ENCODE measurements at regions of chr3 and their contacts with region 1.

Region 1: DNA sequence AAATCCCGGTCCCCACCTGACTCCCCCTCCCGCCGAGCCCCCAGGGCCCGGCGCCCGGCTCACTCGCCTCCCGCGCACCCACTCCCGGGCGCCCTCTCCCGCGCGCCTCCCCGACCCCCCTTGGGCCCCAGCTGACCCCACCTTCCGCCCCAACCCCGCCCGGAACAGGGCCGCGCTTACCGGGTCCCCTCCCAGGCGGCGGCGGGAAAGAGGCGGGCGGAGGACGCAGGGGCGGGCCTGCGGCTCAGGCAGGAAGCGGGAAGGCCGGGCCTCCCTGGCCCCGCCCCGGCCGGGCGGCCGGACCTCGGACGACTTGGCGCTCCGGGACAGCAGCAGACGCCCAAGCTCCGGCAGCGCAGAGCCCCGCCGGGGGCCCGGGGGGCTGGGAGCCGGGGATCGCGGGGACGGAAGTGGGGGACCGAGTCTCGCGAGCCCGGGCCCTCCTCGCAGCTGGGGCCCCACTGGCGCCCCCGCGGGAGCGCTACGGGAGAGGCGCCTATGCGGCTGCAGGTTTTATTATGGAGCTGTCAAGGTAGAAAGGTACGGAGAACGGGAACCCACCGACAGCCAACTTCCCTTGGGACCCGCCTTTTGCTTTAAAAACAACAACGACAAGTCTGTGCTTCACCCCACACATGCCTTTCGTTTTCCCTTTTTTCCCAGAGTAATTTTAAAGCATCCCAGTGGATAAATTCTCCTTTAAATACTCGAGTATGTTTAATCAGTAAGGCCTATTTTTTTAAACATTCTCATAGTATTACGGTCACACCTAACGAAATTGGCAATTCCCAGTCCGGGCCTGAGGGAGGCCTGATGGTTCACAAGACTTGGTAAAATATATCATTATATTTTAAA is at the start of gene SLC41A3:
- DNase-seq: peak; percentile 65 to 88 (median 82)
- ATAC-seq: peak; percentile 86
- H3K4me3 ChIP-seq: peak within 1 kb of the TSS; percentile 70
- H3K4me3 Mint-ChIP-seq: peak within 1 kb of the TSS; percentile 93
- H3K27ac ChIP-seq: peak within 1 kb of the TSS; percentile 33 to 72
- H3K27ac Mint-ChIP-seq: peak within 1 kb of the TSS; percentile 85
- H3K4me1 ChIP-seq: peaks cover 28% of the 10 kb centered on the region
- H3K4me1 Mint-ChIP-seq: peaks cover 30% of the 10 kb centered on the region
- H3K27me3 ChIP-seq: no peaks in the 10 kb centered on the region
- H3K27me3 Mint-ChIP-seq: no peaks in the 10 kb centered on the region
- CTCF ChIP-seq: peak; percentile 82
- total RNA-seq, gene SLC41A3: 26.5 to 29.1 TPM

Region 2: DNA sequence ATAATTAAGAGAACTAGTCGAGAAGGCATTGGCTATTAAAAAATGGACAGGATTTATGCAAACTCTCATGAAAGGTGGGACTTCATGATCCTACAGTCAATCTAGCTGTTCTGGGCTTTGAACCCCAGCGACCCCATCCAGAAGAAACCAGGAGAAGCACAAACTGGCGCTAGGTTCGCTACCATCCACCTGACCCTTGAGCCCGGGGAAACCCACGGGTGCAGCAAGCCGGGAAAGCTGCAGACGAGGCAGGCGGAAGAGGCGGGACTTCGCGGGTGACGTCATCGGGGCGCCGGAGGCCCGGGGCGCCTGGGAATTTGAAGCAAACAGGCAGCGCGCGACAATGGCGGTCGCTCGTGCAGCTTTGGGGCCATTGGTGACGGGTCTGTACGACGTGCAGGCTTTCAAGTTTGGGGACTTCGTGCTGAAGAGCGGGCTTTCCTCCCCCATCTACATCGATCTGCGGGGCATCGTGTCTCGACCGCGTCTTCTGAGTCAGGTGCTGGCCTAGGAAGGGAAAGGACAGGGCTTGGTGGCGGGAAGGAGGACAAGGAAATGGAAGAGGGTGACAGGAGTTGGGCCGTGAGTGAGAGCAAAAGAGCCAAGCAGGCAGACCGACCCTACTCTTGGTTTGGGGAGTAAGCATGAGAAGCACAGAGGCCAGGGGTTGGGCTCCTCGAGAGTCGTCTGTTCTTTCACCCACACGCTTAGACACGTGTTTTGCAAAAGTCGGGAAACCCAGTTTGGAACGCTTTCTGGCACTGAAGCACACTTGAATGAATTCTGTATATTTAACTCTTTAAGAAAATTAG is 1353.8 kb before region 1 on chr3 and contains the start of gene UMPS:
- CTCF ChIA-PET with region 1: no interaction called
- POLR2A ChIA-PET with region 1: no interaction called
- intact Hi-C with region 1: loop called in 1 of 2 experiments (anchors 10 kb)
- DNase-seq: peak; percentile 83 to 95 (median 91)
- ATAC-seq: peak; percentile 97
- H3K4me3 ChIP-seq: peak within 1 kb of the TSS; percentile 78
- H3K4me3 Mint-ChIP-seq: peak within 1 kb of the TSS; percentile 98
- H3K27ac ChIP-seq: peak within 1 kb of the TSS; percentile 54 to 76
- H3K27ac Mint-ChIP-seq: peak within 1 kb of the TSS; percentile 94
- H3K4me1 ChIP-seq: peaks cover 21% of the 10 kb centered on the region
- H3K4me1 Mint-ChIP-seq: peaks cover 44% of the 10 kb centered on the region
- H3K27me3 ChIP-seq: peaks cover 5 to 11% of the 10 kb centered on the region in 2 experiments
- H3K27me3 Mint-ChIP-seq: peaks cover 17% of the 10 kb centered on the region
- CTCF ChIP-seq: no peak
- total RNA-seq, gene UMPS: 19.5 to 19.7 TPM

Region 3: DNA sequence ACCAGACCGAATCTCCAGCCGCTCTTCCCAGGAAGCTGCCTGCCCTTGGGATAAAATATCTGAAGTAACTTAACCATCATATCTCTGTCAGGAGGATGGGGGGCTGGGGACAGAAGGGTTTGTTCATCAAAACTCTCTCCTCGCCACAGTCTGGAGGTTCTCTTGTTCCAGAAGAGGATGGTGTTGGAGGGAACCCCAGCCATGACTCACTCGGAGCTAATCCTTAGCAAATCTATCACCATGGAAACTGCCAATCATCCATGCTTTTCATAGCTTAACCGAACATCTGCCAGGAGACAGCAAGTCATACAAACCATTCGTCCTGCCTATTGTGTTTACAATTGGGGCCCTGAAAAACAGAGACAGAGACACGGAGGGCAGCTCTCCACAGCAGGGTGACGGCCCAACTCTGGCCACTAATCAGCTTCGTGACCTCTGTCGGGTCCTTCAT is 954.6 kb before region 1 on chr3:
- CTCF ChIA-PET with region 1: no interaction called
- POLR2A ChIA-PET with region 1: no interaction called
- intact Hi-C with region 1: no loop called
- DNase-seq: no peak
- ATAC-seq: no peak
- H3K4me3 ChIP-seq: no peak overlapping the region
- H3K4me3 Mint-ChIP-seq: no peak overlapping the region
- H3K27ac ChIP-seq: no peak overlapping the region
- H3K27ac Mint-ChIP-seq: no peak overlapping the region
- H3K4me1 ChIP-seq: peaks cover 7% of the 10 kb centered on the region
- H3K4me1 Mint-ChIP-seq: peaks cover 13% of the 10 kb centered on the region
- H3K27me3 ChIP-seq: no peaks in the 10 kb centered on the region
- H3K27me3 Mint-ChIP-seq: no peaks in the 10 kb centered on the region
- CTCF ChIP-seq: no peak

Region 4: DNA sequence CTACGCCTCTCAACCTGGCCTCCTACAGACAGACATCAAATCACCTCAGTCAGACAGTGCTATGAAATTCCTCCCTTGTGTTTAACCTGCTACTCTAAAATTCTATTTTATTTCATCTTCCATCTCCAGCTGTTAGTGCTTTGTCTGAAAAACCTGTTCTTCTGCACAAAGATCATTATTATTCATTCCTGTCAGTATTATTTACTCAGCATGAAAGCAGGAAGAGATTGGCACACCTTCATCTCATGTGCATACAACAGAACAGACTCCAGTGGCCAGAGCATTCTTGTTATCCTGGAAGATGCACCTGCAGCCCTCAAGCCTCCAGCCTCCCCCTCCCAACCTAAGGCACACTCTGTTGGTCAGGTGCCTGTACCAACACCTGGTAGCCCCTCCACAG is 117.0 kb before region 1 on chr3:
- CTCF ChIA-PET with region 1: interaction called, 4 read pairs
- POLR2A ChIA-PET with region 1: no interaction called
- intact Hi-C with region 1: loop called in 1 of 2 experiments (anchors 5 kb)
- DNase-seq: no peak
- ATAC-seq: no peak
- H3K4me3 ChIP-seq: no peak overlapping the region
- H3K4me3 Mint-ChIP-seq: no peak overlapping the region
- H3K27ac ChIP-seq: no peak overlapping the region
- H3K27ac Mint-ChIP-seq: no peak overlapping the region
- H3K4me1 ChIP-seq: peaks cover 5% of the 10 kb centered on the region
- H3K4me1 Mint-ChIP-seq: peaks cover 3% of the 10 kb centered on the region
- H3K27me3 ChIP-seq: peaks cover 25 to 33% of the 10 kb centered on the region in 2 experiments
- H3K27me3 Mint-ChIP-seq: peaks cover 25% of the 10 kb centered on the region
- CTCF ChIP-seq: no peak

Region 5: GRCh38 chr3:126129181-126129891 is 45.2 kb after region 1 on chr3:
- CTCF ChIA-PET with region 1: no interaction called
- POLR2A ChIA-PET with region 1: no interaction called
- intact Hi-C with region 1: no loop called
- DNase-seq: peak in 1 of 14 experiments; percentile 19
- ATAC-seq: no peak
- H3K4me3 ChIP-seq: no peak overlapping the region
- H3K4me3 Mint-ChIP-seq: no peak overlapping the region
- H3K27ac ChIP-seq: no peak overlapping the region
- H3K27ac Mint-ChIP-seq: no peak overlapping the region
- H3K4me1 ChIP-seq: peaks cover 3% of the 10 kb centered on the region
- H3K4me1 Mint-ChIP-seq: no peaks in the 10 kb centered on the region
- H3K27me3 ChIP-seq: no peaks in the 10 kb centered on the region
- H3K27me3 Mint-ChIP-seq: peaks cover 10% of the 10 kb centered on the region
- CTCF ChIP-seq: no peak

Region 6: GRCh38 chr3:126357295-126358037 is 273.3 kb after region 1 on chr3 and contains the start of gene KLF15:
- CTCF ChIA-PET with region 1: no interaction called
- POLR2A ChIA-PET with region 1: interaction called, 3 read pairs
- intact Hi-C with region 1: loop called in 1 of 2 experiments (anchors 5 kb)
- DNase-seq: peak; percentile 42 to 88 (median 65)
- ATAC-seq: peak; percentile 91
- H3K4me3 ChIP-seq: peak within 1 kb of the TSS; percentile 65
- H3K4me3 Mint-ChIP-seq: peak within 1 kb of the TSS; percentile 93
- H3K27ac ChIP-seq: no peak within 1 kb of the TSS
- H3K27ac Mint-ChIP-seq: no peak within 1 kb of the TSS
- H3K4me1 ChIP-seq: peaks cover 24% of the 10 kb centered on the region
- H3K4me1 Mint-ChIP-seq: peaks cover 17% of the 10 kb centered on the region
- H3K27me3 ChIP-seq: peaks cover 45 to 49% of the 10 kb centered on the region in 2 experiments
- H3K27me3 Mint-ChIP-seq: peaks cover 58% of the 10 kb centered on the region
- CTCF ChIP-seq: no peak
- total RNA-seq, gene KLF15: 0.30 TPM in 1 of 2 experiments, not detected in the other

Region 7: DNA sequence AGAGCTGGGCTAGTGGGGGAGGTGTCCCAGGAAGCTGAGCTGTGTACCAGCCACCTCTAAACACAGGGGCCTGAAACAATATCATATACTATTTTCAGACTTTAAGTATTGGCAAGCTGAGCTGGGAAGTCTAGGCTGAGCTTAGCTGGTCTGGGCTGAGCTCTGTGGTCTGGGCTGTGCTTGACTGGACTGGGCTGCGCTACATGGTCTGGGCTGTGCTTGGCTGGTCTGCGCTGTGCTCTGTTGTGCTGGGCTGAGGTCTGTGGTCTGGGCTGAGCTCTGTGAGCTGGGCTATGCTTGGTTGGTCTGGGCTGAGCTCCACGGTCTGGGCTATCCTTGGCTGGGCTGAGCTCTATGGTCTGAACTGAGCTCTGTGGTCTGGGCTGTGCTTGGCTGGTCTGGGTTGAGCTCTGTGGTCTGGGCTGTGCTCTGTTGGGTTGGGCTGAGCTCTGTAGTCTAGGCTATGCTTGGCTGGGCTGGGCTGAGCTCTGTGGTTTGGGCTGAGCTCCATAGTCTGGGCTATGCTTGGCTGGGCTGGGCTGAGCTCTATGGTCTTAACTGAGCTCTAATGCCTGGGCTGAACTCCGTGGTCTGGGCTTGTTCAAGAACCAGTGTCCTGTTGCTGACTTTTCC is 990.7 kb after region 1 on chr3:
- CTCF ChIA-PET with region 1: no interaction called
- POLR2A ChIA-PET with region 1: no interaction called
- intact Hi-C with region 1: no loop called
- DNase-seq: no peak
- ATAC-seq: no peak
- H3K4me3 ChIP-seq: no peak overlapping the region
- H3K4me3 Mint-ChIP-seq: no peak overlapping the region
- H3K27ac ChIP-seq: no peak overlapping the region
- H3K27ac Mint-ChIP-seq: no peak overlapping the region
- H3K4me1 ChIP-seq: no peaks in the 10 kb centered on the region
- H3K4me1 Mint-ChIP-seq: no peaks in the 10 kb centered on the region
- H3K27me3 ChIP-seq: no peaks in the 10 kb centered on the region
- H3K27me3 Mint-ChIP-seq: no peaks in the 10 kb centered on the region
- CTCF ChIP-seq: no peak

Region 8: GRCh38 chr3:127590593-127591477 is 1506.7 kb after region 1 on chr3 and contains the start of gene TPRA1:
- CTCF ChIA-PET with region 1: no interaction called
- POLR2A ChIA-PET with region 1: no interaction called
- intact Hi-C with region 1: loop called in 1 of 2 experiments (anchors 10 kb)
- DNase-seq: peak; percentile 51 to 93 (median 74)
- ATAC-seq: peak; percentile 89
- H3K4me3 ChIP-seq: peak within 1 kb of the TSS; percentile 71
- H3K4me3 Mint-ChIP-seq: peak within 1 kb of the TSS; percentile 99
- H3K27ac ChIP-seq: peak within 1 kb of the TSS; percentile 54 to 82
- H3K27ac Mint-ChIP-seq: peak within 1 kb of the TSS; percentile 93
- H3K4me1 ChIP-seq: peaks cover 36% of the 10 kb centered on the region
- H3K4me1 Mint-ChIP-seq: peaks cover 43% of the 10 kb centered on the region
- H3K27me3 ChIP-seq: no peaks in the 10 kb centered on the region
- H3K27me3 Mint-ChIP-seq: no peaks in the 10 kb centered on the region
- CTCF ChIP-seq: no peak
- total RNA-seq, gene TPRA1: 7.5 to 7.8 TPM